PC-9 (cell line): ENCODE measurements at regions of chr1 and their contacts with region 1.

Region 1: DNA sequence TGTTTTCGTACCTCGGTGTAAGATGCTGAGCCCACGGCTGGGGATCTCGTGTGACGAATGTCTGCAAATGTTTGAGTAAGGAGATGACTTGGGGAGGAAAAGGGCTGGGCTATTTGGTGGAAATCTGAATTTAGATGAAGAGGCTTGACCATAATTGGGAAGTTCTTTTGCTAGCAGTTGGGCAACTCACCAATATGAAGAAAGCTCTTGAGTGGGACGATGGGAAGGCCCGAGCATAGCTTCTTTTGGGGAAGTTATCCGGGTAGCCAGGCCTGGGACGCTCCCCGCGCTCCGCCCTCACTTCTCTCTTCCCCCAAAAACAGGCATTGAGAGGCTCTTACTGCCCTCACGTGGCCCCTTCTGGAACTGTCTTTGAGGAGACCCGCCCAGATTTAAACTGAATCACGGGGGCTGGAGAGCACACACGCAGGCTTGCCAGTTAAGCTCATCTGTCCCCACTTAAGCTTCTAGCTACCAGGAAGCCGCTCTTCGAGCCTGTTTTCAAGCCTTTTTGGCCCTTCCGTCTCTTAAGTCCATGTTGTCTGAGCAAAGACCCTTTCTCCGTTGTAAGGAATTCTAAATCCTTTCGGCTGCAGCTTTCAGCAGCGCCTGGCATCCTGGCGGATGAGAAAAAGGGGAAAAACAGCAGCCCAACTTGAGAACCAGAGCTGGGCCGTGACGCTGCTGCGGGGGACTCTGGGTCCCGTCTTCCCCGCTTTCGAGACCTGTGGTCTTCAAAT is 93.1 kb downstream of the NID1 start:
- DNase-seq: peak; percentile 71 to 92
- H3K4me3 ChIP-seq: no peak overlapping the region; the same call in 1 of the 2 replicates
- H3K27ac ChIP-seq: no peak overlapping the region
- H3K4me1 ChIP-seq: peaks cover 13% of the 10 kb centered on the region; the same call in 1 of the 2 replicates
- H3K27me3 ChIP-seq: no peaks in the 10 kb centered on the region
- CTCF ChIP-seq: peak; percentile 92

Region 2: GRCh38 chr1:235093696-235094592 is 877.8 kb before region 1 on chr1:
- CTCF ChIA-PET with region 1: no interaction called
- POLR2A ChIA-PET with region 1: no interaction called
- intact Hi-C with region 1: loop called (anchors 10 kb)
- DNase-seq: peak; percentile 50 to 79
- H3K4me3 ChIP-seq: no peak overlapping the region
- H3K27ac ChIP-seq: no peak overlapping the region
- H3K4me1 ChIP-seq: no peaks in the 10 kb centered on the region
- H3K27me3 ChIP-seq: no peaks in the 10 kb centered on the region
- CTCF ChIP-seq: peak; percentile 88

Region 3: GRCh38 chr1:235513495-235514366 is 458.0 kb before region 1 on chr1:
- CTCF ChIA-PET with region 1: interaction called, 4 read pairs
- POLR2A ChIA-PET with region 1: no interaction called
- intact Hi-C with region 1: loop called (anchors 1 kb)
- DNase-seq: peak; percentile 34 to 57
- H3K4me3 ChIP-seq: no peak overlapping the region
- H3K27ac ChIP-seq: no peak overlapping the region
- H3K4me1 ChIP-seq: no peaks in the 10 kb centered on the region
- H3K27me3 ChIP-seq: no peaks in the 10 kb centered on the region
- CTCF ChIP-seq: peak; percentile 93

Region 4: DNA sequence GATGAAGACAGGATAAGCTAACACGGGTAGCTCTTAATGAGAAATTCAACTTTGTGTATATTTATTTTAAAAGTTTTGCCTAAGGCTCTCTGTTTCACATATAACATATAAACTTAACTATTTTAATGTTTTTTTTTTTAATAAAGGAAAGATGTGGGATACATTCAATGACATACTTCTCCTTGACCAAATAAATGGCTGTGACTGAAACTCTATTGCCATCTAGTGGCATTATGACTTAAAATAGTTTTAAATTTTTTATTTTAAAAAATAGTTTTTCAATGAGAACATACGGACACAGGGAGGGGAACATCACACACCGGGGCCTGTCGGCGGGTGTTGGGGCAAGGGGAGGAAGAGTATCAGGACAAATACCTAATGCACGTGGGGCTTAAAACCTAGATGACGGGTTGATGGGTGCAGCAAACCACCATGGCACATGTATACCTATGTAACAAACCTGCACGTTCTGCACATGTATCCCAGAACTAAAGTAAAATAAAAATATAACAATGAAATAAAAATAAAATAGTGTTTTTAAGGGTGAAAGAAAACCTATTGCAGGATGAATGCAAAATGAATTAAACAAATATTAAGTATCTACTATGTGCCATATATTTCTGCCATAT is 188.5 kb before region 1 on chr1:
- CTCF ChIA-PET with region 1: interaction called, 20 read pairs
- POLR2A ChIA-PET with region 1: no interaction called
- intact Hi-C with region 1: loop called (anchors 1 kb)
- DNase-seq: peak; percentile 9 to 52
- H3K4me3 ChIP-seq: no peak overlapping the region
- H3K27ac ChIP-seq: no peak overlapping the region
- H3K4me1 ChIP-seq: 0 out of 2 replicates have a peak, but pooled peaks cover 4% of the 10 kb centered on the region
- H3K27me3 ChIP-seq: no peaks in the 10 kb centered on the region
- CTCF ChIP-seq: peak; percentile 71

Region 5: DNA sequence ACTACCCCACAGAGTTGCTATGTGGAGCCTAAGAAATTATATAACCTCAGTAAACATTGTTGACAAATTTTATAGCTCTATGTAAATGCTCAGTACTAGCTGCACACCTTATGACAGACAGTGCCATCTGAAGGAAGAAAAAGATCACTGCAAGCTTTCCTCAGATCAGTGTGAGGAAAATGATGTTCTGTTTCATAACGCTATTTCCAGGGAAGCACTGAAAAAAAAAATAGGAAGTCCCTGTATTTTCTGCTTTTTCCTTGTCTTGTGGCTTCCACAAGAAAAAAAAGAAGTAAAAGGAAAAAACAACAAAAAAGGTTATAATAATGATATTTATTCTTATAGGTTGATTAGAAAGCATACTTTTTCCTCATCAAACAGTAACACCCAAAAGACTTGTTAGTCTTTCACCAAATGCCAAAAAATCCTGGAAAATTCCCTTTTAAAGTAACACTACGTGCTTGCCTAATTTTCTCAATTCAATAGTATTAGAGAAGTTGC is 128.2 kb before region 1 on chr1:
- CTCF ChIA-PET with region 1: interaction called, 11 read pairs
- POLR2A ChIA-PET with region 1: no interaction called
- intact Hi-C with region 1: no loop called
- DNase-seq: peak in 1 of 2 experiments; percentile 46
- H3K4me3 ChIP-seq: no peak overlapping the region
- H3K27ac ChIP-seq: no peak overlapping the region
- H3K4me1 ChIP-seq: no peaks in the 10 kb centered on the region
- H3K27me3 ChIP-seq: no peaks in the 10 kb centered on the region
- CTCF ChIP-seq: peak; percentile 59; the same call in 1 of the 2 replicates

Region 6: DNA sequence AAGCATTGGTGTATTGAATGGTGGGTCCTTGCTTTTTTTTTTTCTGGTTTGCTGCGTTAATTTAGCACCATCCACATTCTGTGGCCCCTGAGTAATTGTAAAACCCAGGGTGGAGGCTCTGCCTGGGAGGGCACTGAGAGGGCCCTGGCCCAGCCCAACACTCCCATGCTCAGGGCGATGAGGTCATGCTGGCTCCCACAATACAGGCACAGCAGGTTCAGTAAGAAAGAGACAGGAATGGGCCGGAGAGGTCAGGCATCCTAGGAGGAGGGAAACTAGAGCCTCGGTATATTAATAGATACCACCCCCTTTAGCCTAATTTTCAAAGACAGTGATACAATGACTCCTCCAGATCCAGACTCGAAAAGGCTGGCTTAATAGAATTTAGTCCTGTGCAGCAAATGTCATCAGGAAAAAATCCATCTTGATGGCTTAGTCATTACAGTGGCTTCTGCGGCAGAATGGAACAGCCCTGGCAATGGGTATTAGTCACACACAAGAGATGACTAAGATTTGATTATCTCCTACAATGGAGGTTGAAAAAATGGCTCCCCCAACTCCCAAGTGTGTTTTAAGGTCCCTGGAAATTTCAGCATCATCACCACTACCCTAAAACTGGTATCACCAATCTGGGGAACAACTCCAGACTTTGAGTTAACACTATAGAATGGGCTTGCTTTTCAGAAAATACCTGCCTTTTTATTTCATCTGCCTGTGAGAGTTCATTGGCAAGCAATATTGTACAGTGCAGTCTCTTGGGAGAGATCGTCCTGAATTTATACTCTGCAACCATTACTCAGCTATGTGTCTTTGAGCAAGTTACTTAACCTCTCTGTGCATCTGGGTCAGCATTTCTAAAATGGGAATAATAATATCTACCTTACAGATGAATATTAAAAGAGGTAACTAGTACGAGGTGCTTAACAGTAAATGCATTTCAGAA is 61.1 kb before region 1 on chr1:
- CTCF ChIA-PET with region 1: interaction called, 6 read pairs
- POLR2A ChIA-PET with region 1: no interaction called
- intact Hi-C with region 1: loop called (anchors 1 kb)
- DNase-seq: peak; percentile 93 to 97
- H3K4me3 ChIP-seq: peak overlapping the region; percentile 45; the same call in 1 of the 2 replicates
- H3K27ac ChIP-seq: peak overlapping the region; percentile 99
- H3K4me1 ChIP-seq: peaks cover 78% of the 10 kb centered on the region
- H3K27me3 ChIP-seq: no peaks in the 10 kb centered on the region
- CTCF ChIP-seq: no peak

Region 7: GRCh38 chr1:235999259-235999925 is 27.7 kb after region 1 on chr1:
- CTCF ChIA-PET with region 1: interaction called, 10 read pairs
- POLR2A ChIA-PET with region 1: no interaction called
- intact Hi-C with region 1: no loop called
- DNase-seq: peak; percentile 55 to 83
- H3K4me3 ChIP-seq: no peak overlapping the region
- H3K27ac ChIP-seq: peak overlapping the region; percentile 85
- H3K4me1 ChIP-seq: peaks cover 27% of the 10 kb centered on the region
- H3K27me3 ChIP-seq: no peaks in the 10 kb centered on the region
- CTCF ChIP-seq: no peak